H1 (cell line): ENCODE measurements at regions of chr6 and their contacts with region 1.

Region 1: DNA sequence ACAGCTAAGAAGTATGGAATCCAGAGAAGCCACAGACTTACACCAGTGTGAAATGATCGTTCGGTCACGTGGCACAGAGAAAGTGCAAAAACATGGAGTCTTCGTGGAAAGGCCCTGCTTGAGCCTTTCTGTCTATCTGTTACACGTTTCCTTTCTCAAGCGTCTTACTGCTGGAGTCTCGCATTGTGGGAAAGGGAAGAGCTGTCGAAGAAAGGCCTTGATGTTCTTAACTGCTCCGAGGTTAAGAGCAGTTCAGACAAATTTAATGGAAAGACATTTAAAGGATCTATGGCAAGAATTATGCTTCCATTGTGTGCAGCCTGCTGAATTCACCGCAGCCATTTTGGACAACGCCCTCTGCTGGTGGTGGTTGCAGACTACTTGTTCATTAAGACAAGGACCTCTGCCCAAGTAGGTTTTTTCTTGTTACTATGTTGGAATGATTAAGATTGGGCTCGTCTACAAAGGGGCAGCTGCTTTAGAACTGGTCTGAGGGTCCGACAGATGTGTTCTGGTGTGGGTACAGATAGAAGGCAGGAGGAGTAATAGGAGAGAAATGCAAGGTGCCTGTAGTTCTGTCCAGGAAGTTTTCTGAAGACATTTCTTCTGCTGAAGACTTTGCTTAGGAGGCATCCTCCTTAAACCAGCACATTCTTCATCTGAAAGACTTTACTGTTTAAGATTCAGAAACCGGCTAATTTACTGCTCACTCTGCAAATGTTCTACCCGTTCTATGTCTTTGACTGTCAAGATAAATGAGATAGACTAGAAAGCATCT is 24.7 kb upstream of the CCN6 start:
- DNase-seq: peak; percentile 47 to 86
- H3K4me3 ChIP-seq: no peak overlapping the region
- H3K27ac ChIP-seq: no peak overlapping the region
- H3K4me1 ChIP-seq: no peaks in the 10 kb centered on the region
- H3K27me3 ChIP-seq: no peaks in the 10 kb centered on the region
- CTCF ChIP-seq: peak; percentile 72 to 86 (median 77)
- EP300 ChIP-seq: no peak
- POLR2A ChIP-seq: no peak
- RAD21 ChIP-seq: peak; percentile 61 to 71

Region 2: DNA sequence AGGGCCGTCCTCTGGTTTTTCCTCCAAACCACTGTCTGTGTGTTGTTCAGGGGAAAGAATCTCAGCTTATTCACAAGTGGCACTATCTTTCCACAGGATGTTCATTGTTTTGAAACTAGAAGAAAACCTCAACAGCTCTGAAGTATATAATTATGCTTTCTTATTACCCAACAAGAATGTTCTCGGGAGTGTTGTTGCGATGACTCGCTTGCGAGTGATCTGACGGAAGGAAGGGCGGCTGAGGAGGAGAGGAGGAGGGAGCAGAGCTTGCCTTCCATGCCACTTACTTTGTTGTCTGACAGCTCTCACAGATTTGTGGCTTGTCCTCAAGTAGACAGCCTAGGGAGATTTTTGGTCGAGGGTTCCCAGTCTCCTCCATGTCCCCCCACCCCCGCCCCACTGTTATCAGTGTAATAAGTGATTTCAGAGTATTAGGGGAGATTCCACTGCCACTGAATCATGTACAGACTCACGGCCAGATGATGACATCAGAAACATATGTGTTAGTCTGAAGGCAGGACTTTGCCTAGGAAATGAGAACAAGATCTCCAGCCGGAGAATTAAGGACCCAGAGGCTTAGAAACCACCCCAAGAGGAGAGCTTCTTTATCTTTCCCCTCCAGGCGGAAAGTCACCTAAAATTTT is 56.0 kb before region 1 on chr6:
- CTCF ChIA-PET with region 1: no interaction called
- POLR2A ChIA-PET with region 1: no interaction called
- DNase-seq: no peak
- H3K4me3 ChIP-seq: no peak overlapping the region
- H3K27ac ChIP-seq: no peak overlapping the region
- H3K4me1 ChIP-seq: peaks cover 0 to 3% (median under 1%) of the 10 kb centered on the region in 4 experiments; a peak in 2 of 7 replicates
- H3K27me3 ChIP-seq: no peaks in the 10 kb centered on the region
- CTCF ChIP-seq: no peak
- EP300 ChIP-seq: no peak
- POLR2A ChIP-seq: no peak
- RAD21 ChIP-seq: no peak

Region 3: DNA sequence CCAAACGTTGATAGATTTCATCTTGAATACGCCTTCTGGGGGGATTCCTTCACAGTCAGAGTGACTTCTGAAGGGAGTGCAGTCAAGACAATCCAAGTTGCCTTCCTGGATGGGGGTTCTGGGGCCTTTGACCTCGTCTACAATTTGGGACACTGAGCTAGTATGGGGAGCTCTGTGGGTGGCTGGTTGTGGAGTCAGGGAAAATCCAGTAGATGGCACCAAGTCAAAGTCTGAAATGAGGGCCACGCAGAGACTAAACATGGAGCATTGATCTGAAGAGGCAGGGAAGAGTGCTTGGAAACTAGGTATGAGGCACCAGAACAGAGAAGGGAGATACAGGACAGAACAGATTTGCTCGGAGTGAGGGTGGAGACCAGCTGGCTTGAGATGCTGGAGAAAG is 18.9 kb before region 1 on chr6:
- CTCF ChIA-PET with region 1: interaction called, 92 read pairs
- POLR2A ChIA-PET with region 1: no interaction called
- DNase-seq: no peak
- H3K4me3 ChIP-seq: no peak overlapping the region
- H3K27ac ChIP-seq: no peak overlapping the region
- H3K4me1 ChIP-seq: no peaks in the 10 kb centered on the region
- H3K27me3 ChIP-seq: no peaks in the 10 kb centered on the region
- CTCF ChIP-seq: peak in 1 of 3 experiments; percentile 11; a peak in 1 of 4 replicates
- EP300 ChIP-seq: no peak
- POLR2A ChIP-seq: no peak
- RAD21 ChIP-seq: peak in 1 of 2 experiments; percentile 31; a peak in 2 of 4 replicates

Region 4: GRCh38 chr6:112018619-112019416 is 10.4 kb before region 1 on chr6:
- CTCF ChIA-PET with region 1: interaction called, 92 read pairs
- POLR2A ChIA-PET with region 1: interaction called, 3 read pairs
- DNase-seq: no peak
- H3K4me3 ChIP-seq: no peak overlapping the region
- H3K27ac ChIP-seq: no peak overlapping the region
- H3K4me1 ChIP-seq: no peaks in the 10 kb centered on the region
- H3K27me3 ChIP-seq: no peaks in the 10 kb centered on the region
- CTCF ChIP-seq: no peak
- EP300 ChIP-seq: no peak
- POLR2A ChIP-seq: no peak
- RAD21 ChIP-seq: no peak